ENCODE measurements at regions of chr15 and their contacts with region 1.

Region 1: DNA sequence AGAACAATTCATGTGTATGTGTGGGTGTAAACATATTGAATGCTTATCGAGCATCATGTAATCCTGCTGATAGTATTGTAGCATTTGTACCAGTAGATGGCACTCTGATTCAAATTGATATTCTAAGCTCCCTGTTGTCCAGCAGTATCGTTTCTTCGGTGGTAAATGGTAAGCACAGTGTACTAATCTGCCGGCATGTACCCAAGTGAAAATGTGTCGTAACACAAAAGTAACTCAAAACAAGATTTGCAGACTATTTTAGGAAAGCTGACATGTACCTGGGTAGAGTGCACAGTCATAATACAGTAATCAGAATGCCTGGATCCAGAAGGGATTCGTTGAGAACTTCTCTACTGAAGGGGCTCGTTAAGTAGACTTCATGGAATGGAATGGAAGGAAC is 31.7 kb upstream of the MNS1 start:
- DNase-seq: peak; percentile 71
- H3K4me3 Mint-ChIP-seq: no peak overlapping the region
- H3K27ac Mint-ChIP-seq: no peak overlapping the region
- H3K4me1 Mint-ChIP-seq: peaks cover 5% of the 10 kb centered on the region
- H3K27me3 Mint-ChIP-seq: peaks cover 14% of the 10 kb centered on the region
- CTCF ChIP-seq: peak; percentile 64

Region 2: GRCh38 chr15:56608140-56608778 is 111.6 kb after region 1 on chr15:
- CTCF ChIA-PET with region 1: no interaction called
- POLR2A ChIA-PET with region 1: no interaction called
- intact Hi-C with region 1: no loop called
- DNase-seq: no peak
- H3K4me3 Mint-ChIP-seq: no peak overlapping the region
- H3K27ac Mint-ChIP-seq: no peak overlapping the region
- H3K4me1 Mint-ChIP-seq: no peaks in the 10 kb centered on the region
- H3K27me3 Mint-ChIP-seq: no peaks in the 10 kb centered on the region
- CTCF ChIP-seq: no peak

Region 3: DNA sequence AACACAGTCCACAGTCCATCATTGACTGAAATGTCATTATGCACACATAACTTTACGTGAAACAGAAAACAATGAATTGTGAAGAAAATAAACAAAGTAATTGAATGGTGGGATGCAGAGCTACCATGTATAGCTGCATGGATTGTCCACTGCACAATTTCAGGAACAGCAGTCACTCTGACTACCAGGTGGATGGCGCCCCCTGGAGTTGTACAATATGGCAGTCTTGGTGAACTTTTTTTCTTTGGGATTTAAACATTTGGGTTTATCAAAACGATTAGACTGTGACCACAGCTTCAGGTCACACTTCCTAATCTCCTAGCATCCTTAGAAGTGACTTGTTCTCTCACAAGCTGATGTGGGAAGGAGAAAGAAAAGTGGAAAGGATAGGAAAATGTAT is 372.9 kb after region 1 on chr15:
- CTCF ChIA-PET with region 1: interaction called, 6 read pairs
- POLR2A ChIA-PET with region 1: no interaction called
- intact Hi-C with region 1: loop called (anchors 1 kb)
- DNase-seq: peak; percentile 52
- H3K4me3 Mint-ChIP-seq: no peak overlapping the region
- H3K27ac Mint-ChIP-seq: no peak overlapping the region
- H3K4me1 Mint-ChIP-seq: peaks cover 6% of the 10 kb centered on the region
- H3K27me3 Mint-ChIP-seq: no peaks in the 10 kb centered on the region
- CTCF ChIP-seq: peak; percentile 42

Region 4: DNA sequence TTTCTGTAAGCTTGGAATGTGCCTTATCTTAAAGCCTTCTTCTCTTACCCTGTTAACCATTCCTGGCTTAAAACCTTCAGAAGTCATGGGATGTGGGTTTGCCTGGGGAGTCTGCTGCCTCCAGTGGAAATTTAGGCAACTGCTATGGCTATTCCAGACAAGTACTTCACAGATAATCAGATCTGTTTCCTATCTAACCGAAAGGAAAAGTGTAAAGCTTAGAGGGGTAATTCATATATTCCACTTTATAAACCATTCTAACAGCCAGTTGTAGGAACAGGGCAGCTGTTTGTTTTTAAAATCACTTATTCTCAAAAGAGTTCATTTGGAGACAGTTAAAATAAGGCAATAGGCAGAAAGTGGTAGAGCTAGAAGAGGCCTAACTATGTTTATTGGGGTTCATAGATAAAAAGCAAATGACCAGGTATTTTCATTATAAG is 641.7 kb after region 1 on chr15:
- CTCF ChIA-PET with region 1: interaction called, 3 read pairs
- POLR2A ChIA-PET with region 1: no interaction called
- intact Hi-C with region 1: loop called (anchors 1 kb)
- DNase-seq: peak; percentile 65
- H3K4me3 Mint-ChIP-seq: no peak overlapping the region
- H3K27ac Mint-ChIP-seq: no peak overlapping the region
- H3K4me1 Mint-ChIP-seq: no peaks in the 10 kb centered on the region
- H3K27me3 Mint-ChIP-seq: no peaks in the 10 kb centered on the region
- CTCF ChIP-seq: peak; percentile 66

Region 5: GRCh38 chr15:57306161-57306943 is 809.7 kb after region 1 on chr15:
- CTCF ChIA-PET with region 1: interaction called, 12 read pairs
- POLR2A ChIA-PET with region 1: no interaction called
- intact Hi-C with region 1: loop called (anchors 1 kb)
- DNase-seq: peak; percentile 74
- H3K4me3 Mint-ChIP-seq: peak overlapping the region; percentile 32
- H3K27ac Mint-ChIP-seq: no peak overlapping the region
- H3K4me1 Mint-ChIP-seq: no peaks in the 10 kb centered on the region
- H3K27me3 Mint-ChIP-seq: no peaks in the 10 kb centered on the region
- CTCF ChIP-seq: peak; percentile 77